ENCODE measurements at regions of chr2 and their contacts with region 1.

Region 1: GRCh38 chr2:240232961-240233893 is 92.8 kb upstream of the OTOS start:
- DNase-seq: peak; percentile 94 to 97
- ATAC-seq: peak; percentile 60 to 66
- H3K4me3 ChIP-seq: peak overlapping the region; percentile 48 to 52 (median 50)
- H3K27ac ChIP-seq: peak overlapping the region; percentile 95 to 98 (median 96)
- H3K4me1 ChIP-seq: peaks cover 37 to 38% of the 10 kb centered on the region in 2 donors
- H3K27me3 ChIP-seq: no peaks in the 10 kb centered on the region
- CTCF ChIP-seq: peak; percentile 90 to 98 (median 96)
- POLR2A ChIP-seq: peak in 1 of 2 donors; percentile 18

Region 2: GRCh38 chr2:240213476-240214421 is 19.5 kb before region 1 on chr2:
- in situ Hi-C with region 1: no loop called
- intact Hi-C with region 1: no loop called
- DNase-seq: no peak
- ATAC-seq: no peak
- H3K4me3 ChIP-seq: no peak overlapping the region
- H3K27ac ChIP-seq: no peak overlapping the region
- H3K4me1 ChIP-seq: no peaks in the 10 kb centered on the region
- H3K27me3 ChIP-seq: no peaks in the 10 kb centered on the region
- CTCF ChIP-seq: no peak
- POLR2A ChIP-seq: no peak

Region 3: DNA sequence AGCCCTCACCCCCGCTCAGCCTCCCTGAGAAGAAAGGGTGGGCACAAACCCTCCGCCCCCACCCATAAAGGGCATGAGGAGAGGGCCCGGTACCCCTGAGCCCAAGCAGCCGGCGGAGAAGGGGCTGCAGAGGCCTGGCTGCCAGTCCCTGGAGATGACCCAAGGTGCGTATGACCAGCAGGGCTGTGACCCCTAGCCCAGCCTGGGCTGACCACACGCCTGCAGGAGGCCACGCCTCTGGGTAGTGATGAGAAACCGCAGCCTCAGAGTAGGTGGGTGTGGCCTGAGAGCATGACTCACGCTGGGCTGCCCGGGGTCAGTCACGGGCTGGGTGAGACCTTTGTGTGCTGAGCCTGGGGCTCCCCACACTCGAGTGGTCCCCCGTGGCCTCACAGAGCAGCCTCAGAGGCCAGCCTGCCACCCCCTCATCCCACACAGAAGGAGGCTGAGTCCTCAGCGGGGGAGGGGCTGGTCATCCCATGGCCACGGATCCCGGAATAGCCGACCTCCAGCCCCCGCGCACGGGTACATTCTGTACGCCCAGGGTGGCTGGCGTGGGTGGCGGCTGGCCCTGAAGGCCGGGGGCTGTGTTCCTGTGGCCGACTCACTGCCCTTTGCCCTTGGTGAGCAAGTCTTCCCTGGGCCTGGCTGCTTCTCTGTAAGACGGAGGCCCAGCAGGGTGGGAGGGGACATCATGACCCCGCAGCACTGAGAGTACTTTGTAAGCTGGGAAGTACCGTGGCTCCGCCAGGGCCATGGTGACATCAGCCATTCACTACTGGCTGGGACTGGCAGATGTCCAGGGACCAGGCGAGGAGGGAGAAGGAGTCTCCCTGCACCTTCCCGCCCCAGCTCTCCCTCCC is 18.0 kb after region 1 on chr2:
- in situ Hi-C with region 1: no loop called
- intact Hi-C with region 1: loop called (anchors 1 kb)
- DNase-seq: peak; percentile 91 to 97
- ATAC-seq: peak; percentile 79 to 82
- H3K4me3 ChIP-seq: peak overlapping the region; percentile 15 to 41 (median 32)
- H3K27ac ChIP-seq: peak overlapping the region; percentile 93 to 96 (median 95)
- H3K4me1 ChIP-seq: peaks cover 43 to 47% of the 10 kb centered on the region in 2 donors
- H3K27me3 ChIP-seq: no peaks in the 10 kb centered on the region
- CTCF ChIP-seq: no peak
- POLR2A ChIP-seq: peak; percentile 85

Region 4: DNA sequence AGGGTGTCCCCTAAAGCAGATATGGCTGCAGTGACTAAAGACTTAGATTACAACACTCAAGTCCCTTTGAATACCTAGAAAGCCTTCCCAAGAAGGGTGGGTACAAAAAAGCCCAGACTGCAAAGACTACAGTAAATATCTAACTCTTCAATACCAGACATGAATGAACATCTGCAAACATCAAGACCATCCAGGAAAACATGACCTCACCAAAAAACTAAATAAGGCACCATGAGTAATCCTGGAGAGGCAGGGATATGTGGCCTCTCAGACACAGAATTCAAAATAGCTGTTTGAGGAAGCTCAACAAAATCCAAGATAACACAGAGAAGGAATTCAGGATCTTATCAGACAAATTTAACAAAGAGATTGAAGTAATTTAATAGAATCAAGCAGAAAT is 45.4 kb after region 1 on chr2:
- in situ Hi-C with region 1: no loop called
- intact Hi-C with region 1: loop called (anchors 1 kb)
- DNase-seq: no peak
- ATAC-seq: peak; percentile 90 to 93
- H3K4me3 ChIP-seq: no peak overlapping the region
- H3K27ac ChIP-seq: peak overlapping the region; percentile 5 to 58 (median 32)
- H3K4me1 ChIP-seq: peaks cover 11 to 15% of the 10 kb centered on the region in 2 donors
- H3K27me3 ChIP-seq: no peaks in the 10 kb centered on the region
- CTCF ChIP-seq: no peak
- POLR2A ChIP-seq: no peak

Region 5: DNA sequence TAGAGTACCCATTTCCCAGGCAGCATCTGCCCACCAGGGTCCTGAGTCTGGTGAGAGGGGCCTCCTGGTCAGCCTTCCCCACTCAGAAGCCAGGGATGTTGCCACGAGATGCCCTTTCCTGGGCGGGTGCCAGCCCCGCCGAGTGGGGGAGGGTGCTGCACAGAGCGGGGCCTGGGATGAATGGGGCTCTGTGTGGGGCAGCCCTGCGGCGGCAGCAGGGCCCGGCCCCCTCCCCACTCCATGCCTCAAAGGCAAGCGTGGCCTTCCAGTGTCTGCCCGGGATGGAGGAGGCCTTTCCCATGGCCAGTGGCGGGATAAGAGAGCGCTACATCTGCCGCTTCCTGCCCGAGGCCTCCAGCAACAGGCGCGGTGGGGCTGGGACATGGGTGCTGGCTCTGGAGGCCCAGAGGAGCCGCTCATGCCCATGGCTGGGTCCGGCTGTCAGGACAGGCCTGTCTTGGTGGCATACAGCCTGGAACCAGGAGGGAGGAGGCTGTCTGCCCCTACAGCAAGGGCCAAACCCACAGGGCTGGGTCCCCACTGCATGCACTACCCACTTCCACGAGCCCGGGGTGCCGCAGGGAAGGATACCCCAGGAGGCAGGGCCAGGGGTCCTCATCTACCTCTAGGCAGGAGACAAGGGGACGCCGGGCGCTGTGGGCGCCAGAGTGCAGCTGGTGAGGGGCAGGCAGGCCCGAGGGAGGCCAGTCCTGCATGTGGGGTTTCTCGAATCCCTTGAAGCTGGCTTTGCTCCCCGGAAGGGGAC is 107.0 kb after region 1 on chr2:
- in situ Hi-C with region 1: no loop called
- intact Hi-C with region 1: loop called (anchors 5 kb)
- DNase-seq: no peak
- ATAC-seq: no peak
- H3K4me3 ChIP-seq: no peak overlapping the region
- H3K27ac ChIP-seq: no peak overlapping the region
- H3K4me1 ChIP-seq: no peaks in the 10 kb centered on the region
- H3K27me3 ChIP-seq: no peaks in the 10 kb centered on the region
- CTCF ChIP-seq: no peak
- POLR2A ChIP-seq: no peak

Region 6: DNA sequence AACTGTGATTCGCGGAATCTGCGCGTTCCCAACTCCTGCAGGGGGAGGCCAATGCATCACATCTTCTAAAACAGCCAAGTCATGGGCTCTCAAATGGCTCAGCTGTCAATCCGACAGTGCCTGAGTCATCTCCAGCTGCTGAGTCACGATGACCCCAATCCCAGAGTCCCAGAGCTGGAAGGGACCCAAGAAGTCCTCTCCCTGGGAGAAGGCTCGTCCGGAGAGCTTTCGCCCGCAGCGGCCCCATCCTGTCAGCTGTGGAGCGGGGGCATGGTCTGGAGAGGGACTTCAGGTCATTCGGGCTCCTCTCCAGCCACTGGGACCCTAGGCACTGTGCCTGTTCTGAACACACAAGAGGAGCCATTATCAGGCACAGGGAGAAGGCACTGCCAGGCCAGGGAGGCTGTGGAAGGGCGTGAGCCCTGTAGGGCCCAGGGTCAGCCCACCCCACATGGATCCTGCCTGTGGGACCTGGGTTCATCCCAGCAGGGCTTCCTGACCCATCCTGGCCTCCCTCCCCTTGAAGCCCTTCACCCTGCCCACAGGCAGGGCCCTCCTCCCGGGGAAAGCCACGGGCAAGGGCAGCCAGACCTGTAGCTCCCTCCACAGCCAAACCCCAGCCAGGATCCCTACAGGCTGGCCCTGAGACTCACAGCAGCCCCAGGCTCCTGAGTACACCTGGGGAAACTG is 154.6 kb after region 1 on chr2:
- in situ Hi-C with region 1: no loop called
- intact Hi-C with region 1: loop called (anchors 5 kb)
- DNase-seq: peak; percentile 66 to 86
- ATAC-seq: peak; percentile 80 to 85
- H3K4me3 ChIP-seq: no peak overlapping the region
- H3K27ac ChIP-seq: peak overlapping the region; percentile 52 to 66 (median 58)
- H3K4me1 ChIP-seq: peaks cover 26 to 31% of the 10 kb centered on the region in 2 donors
- H3K27me3 ChIP-seq: no peaks in the 10 kb centered on the region
- CTCF ChIP-seq: no peak
- POLR2A ChIP-seq: no peak

Region 7: GRCh38 chr2:240566203-240567136 is 333.2 kb after region 1 on chr2:
- in situ Hi-C with region 1: no loop called
- intact Hi-C with region 1: loop called (anchors 5 kb)
- DNase-seq: peak; percentile 81 to 87
- ATAC-seq: peak; percentile 46 to 51
- H3K4me3 ChIP-seq: peak overlapping the region; percentile 73 to 78 (median 76)
- H3K27ac ChIP-seq: peak overlapping the region; percentile 95 to 98 (median 96)
- H3K4me1 ChIP-seq: peaks cover 43 to 45% of the 10 kb centered on the region in 2 donors
- H3K27me3 ChIP-seq: no peaks in the 10 kb centered on the region
- CTCF ChIP-seq: peak; percentile 46 to 97 (median 84)
- POLR2A ChIP-seq: peak; percentile 55 to 59

Measured in gastrocnemius medialis (tissue), 4 donors.